ENCODE measurements at regions of chr17 and their contacts with region 1.

Region 1: GRCh38 chr17:3636154-3636907 is at the starts of genes CTNS and SHPK:
- DNase-seq: peak; percentile 93 to 99
- H3K4me3 ChIP-seq: peak within 1 kb of the TSS; percentile 67
- H3K27ac ChIP-seq: peak within 1 kb of the TSS; percentile 64
- H3K4me1 ChIP-seq: peaks cover 15% of the 10 kb centered on the region; the same call in 1 of the 2 replicates
- H3K27me3 ChIP-seq: no peaks in the 10 kb centered on the region
- CTCF ChIP-seq: no peak
- total RNA-seq, gene CTNS: 12.5 and 20.0 TPM in 2 replicates
- total RNA-seq, gene SHPK: 19.8 and 21.4 TPM in 2 replicates

Region 2: GRCh38 chr17:2711601-2712299 is 924.6 kb before region 1 on chr17 and contains the start of gene CLUH:
- CTCF ChIA-PET with region 1: no interaction called
- POLR2A ChIA-PET with region 1: no interaction called
- intact Hi-C with region 1: loop called (anchors 5 kb)
- DNase-seq: peak; percentile 83 to 98
- H3K4me3 ChIP-seq: peak within 1 kb of the TSS; percentile 82
- H3K27ac ChIP-seq: peak within 1 kb of the TSS; percentile 63
- H3K4me1 ChIP-seq: peaks cover 27% of the 10 kb centered on the region; the same call in 1 of the 2 replicates
- H3K27me3 ChIP-seq: no peaks in the 10 kb centered on the region
- CTCF ChIP-seq: no peak
- total RNA-seq, gene CLUH: 142 and 165 TPM in 2 replicates

Region 3: DNA sequence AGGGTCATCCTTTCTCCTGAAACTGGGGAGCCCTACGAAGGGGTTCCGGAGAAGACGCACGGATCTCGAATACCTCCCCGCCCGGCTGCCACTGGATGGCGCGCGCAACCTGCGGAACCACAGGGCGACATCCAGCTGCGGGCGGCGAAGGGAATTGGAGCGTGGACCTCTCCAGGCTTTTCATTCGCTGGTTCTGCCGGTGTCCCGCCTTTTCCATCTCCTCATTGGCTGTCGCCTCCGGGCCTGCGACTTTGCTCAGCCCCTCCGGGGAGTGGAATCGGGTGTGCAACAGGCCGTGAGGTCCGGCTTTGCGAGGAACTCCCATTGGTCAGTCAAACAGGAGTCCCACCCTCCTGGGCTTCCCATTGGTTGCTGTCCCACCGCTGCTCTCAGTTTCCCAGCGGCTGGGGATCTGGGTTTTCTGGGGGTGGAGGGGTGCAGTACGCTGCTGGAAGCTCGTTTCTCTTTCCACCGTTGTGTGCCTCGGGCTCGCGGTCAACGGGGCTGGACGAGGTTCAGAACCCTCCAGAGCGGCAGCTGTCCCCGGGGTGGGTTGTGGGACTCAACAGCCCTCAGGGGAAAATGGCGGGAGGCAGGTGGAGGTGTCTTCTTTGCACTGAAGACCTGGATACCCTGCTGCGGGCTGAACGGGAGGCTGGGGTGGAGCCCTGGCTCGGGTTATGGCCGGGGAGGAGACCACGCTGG is 587.4 kb before region 1 on chr17:
- CTCF ChIA-PET with region 1: no interaction called
- POLR2A ChIA-PET with region 1: no interaction called
- intact Hi-C with region 1: loop called (anchors 5 kb)
- DNase-seq: peak; percentile 88 to 94
- H3K4me3 ChIP-seq: peak overlapping the region; percentile 83
- H3K27ac ChIP-seq: no peak overlapping the region
- H3K4me1 ChIP-seq: no peaks in the 10 kb centered on the region; the same call in 1 of the 2 replicates
- H3K27me3 ChIP-seq: no peaks in the 10 kb centered on the region
- CTCF ChIP-seq: peak; percentile 78

Region 4: GRCh38 chr17:3668279-3669085 is 32.2 kb after region 1 on chr17 and contains the starts of genes EMC6 and TAX1BP3:
- CTCF ChIA-PET with region 1: no interaction called
- POLR2A ChIA-PET with region 1: interaction called, 26 read pairs
- intact Hi-C with region 1: loop called (anchors 1 kb)
- DNase-seq: peak; percentile 92 to 100
- H3K4me3 ChIP-seq: peak within 1 kb of the TSS; percentile 95
- H3K27ac ChIP-seq: peak within 1 kb of the TSS; percentile 88
- H3K4me1 ChIP-seq: peaks cover 25% of the 10 kb centered on the region
- H3K27me3 ChIP-seq: no peaks in the 10 kb centered on the region
- CTCF ChIP-seq: no peak; the same call in 1 of the 2 replicates
- total RNA-seq, gene EMC6: 89.6 and 89.9 TPM in 2 replicates
- total RNA-seq, gene TAX1BP3: 147 and 168 TPM in 2 replicates